ENCODE measurements at regions of chr19 and their contacts with region 1.

Region 1: DNA sequence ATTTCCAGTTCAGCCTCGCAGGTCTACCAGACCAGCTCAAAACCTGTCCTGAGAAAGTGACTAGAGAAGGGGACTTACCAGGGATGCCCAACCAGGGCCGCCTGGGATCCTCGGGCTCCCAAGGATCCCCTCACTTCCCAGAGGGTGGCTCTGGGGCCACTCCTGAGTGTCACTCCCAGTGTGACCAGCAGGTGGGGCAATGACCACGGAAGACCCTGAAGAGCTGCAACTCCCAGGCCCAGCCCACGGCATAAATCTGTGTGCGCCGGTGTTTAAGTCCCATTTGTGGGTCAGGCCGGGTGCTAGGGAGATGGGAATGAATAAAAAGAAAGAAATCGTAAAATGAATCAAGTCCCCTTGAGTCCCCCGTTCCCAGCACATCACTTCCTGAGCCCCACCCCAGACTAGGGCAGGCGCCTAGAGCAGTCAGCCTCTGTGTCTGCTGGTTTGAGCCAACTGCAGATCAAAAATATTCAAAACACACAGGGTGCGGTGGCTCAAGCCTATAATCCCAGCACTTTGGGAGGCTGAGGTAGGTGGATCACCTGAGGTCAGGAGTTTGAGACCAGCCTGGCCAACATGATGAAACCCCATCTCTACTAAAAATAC is 10.7 kb downstream of the PTGIR start:
- DNase-seq: peak; percentile 66 to 88 (median 83)
- ATAC-seq: peak; percentile 71
- H3K4me3 ChIP-seq: peak overlapping the region in 1 of 2 experiments; percentile 20
- H3K4me3 Mint-ChIP-seq: no peak overlapping the region
- H3K27ac ChIP-seq: no peak overlapping the region
- H3K27ac Mint-ChIP-seq: peak overlapping the region; percentile 70
- H3K4me1 ChIP-seq: peaks cover 76% of the 10 kb centered on the region
- H3K4me1 Mint-ChIP-seq: peaks cover 64% of the 10 kb centered on the region
- H3K27me3 ChIP-seq: no peaks in the 10 kb centered on the region
- H3K27me3 Mint-ChIP-seq: no peaks in the 10 kb centered on the region
- CTCF ChIP-seq: peak; percentile 91

Region 2: DNA sequence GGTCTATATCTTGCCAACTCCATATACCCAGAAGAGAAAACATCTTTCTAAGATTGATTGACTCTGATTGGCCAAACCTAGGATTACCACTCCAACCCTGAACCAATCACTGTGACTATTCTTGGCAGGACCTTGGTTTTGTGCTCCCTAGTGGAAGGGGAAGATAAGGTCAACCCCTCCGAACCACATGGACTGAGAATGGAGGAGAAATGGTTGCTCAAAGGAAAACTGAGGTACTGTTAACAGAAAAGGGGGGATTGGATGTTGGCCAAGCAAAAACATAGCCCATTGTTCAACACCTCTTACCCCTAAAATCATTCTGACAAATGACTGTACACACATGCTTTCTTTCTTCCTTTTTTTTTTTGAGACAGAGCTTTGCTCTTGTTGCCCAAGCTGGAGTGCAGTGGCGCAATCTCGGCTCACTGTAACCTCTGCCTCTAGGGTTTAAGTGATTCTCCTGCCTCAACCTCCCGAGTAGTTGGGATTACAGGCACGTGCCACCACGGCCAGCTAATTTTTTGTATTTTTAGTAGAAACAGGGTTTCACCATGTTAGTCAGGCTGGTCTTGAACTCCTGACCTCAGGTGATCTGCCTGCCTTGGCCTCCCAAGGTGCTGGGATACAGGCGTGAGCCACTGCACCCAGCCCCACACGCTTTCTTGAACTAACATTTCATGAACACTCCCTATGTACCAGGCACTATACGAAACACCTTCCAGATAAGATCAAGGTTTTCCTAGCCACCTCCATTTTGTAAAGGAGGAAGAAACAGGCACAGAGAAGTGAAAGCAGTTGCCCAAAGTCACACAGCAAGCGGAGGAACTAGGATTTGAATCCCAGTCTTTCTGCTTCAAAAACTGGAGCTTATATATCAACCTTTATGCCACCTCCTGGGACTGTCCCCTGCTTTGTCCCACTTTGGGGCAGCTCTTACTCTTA is 874.4 kb before region 1 on chr19:
- CTCF ChIA-PET with region 1: no interaction called
- POLR2A ChIA-PET with region 1: no interaction called
- intact Hi-C with region 1: no loop called
- DNase-seq: no peak
- ATAC-seq: no peak
- H3K4me3 ChIP-seq: no peak overlapping the region
- H3K4me3 Mint-ChIP-seq: no peak overlapping the region
- H3K27ac ChIP-seq: no peak overlapping the region
- H3K27ac Mint-ChIP-seq: no peak overlapping the region
- H3K4me1 ChIP-seq: no peaks in the 10 kb centered on the region
- H3K4me1 Mint-ChIP-seq: no peaks in the 10 kb centered on the region
- H3K27me3 ChIP-seq: no peaks in the 10 kb centered on the region
- H3K27me3 Mint-ChIP-seq: peaks cover 6% of the 10 kb centered on the region
- CTCF ChIP-seq: no peak

Region 3: GRCh38 chr19:46579361-46579879 is 34.8 kb before region 1 on chr19:
- CTCF ChIA-PET with region 1: no interaction called
- POLR2A ChIA-PET with region 1: no interaction called
- intact Hi-C with region 1: loop called in 1 of 2 experiments (anchors 1 kb)
- DNase-seq: peak in 6 of 9 experiments; percentile 14 to 58 (median 36)
- ATAC-seq: peak; percentile 66
- H3K4me3 ChIP-seq: no peak overlapping the region
- H3K4me3 Mint-ChIP-seq: no peak overlapping the region
- H3K27ac ChIP-seq: no peak overlapping the region
- H3K27ac Mint-ChIP-seq: no peak overlapping the region
- H3K4me1 ChIP-seq: peaks cover 4% of the 10 kb centered on the region
- H3K4me1 Mint-ChIP-seq: peaks cover 21% of the 10 kb centered on the region
- H3K27me3 ChIP-seq: no peaks in the 10 kb centered on the region
- H3K27me3 Mint-ChIP-seq: peaks cover 3% of the 10 kb centered on the region
- CTCF ChIP-seq: peak; percentile 41

Region 4: DNA sequence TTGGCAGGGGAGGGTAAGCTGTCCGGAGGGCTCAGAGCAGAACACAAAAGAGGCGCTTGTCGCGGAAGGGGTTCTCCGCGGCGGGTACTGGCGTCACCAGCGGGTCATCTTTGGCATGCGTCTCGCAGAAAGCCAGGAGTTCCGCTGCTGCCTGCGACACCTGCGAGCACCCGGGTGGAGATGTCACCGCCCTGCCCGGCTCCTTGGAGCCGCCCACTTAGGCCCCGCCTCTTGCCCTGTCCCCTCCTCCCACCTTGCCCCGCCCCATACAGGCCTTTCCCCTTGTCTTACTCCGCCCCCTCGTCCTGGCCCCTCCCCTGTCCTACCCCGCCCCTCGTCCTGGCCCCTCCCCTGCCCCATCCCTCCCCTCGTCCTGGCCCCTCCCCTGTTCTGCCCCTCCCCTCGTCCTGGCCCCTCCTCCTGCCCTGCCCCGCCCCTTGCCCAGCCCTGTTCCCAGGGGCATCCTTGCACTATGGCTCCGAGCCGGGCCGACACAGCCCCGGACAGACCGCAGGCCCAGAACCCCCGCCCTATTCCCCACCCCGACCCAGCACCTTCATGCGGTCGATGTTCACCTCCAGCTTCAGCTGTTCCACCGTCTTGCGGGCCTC is 19.9 kb after region 1 on chr19:
- CTCF ChIA-PET with region 1: interaction called, 17 read pairs
- POLR2A ChIA-PET with region 1: interaction called, 10 read pairs
- intact Hi-C with region 1: loop called (anchors 1 kb)
- DNase-seq: peak; percentile 86 to 96 (median 92)
- ATAC-seq: peak; percentile 83
- H3K4me3 ChIP-seq: peak overlapping the region; percentile 40 to 59
- H3K4me3 Mint-ChIP-seq: peak overlapping the region; percentile 80
- H3K27ac ChIP-seq: peak overlapping the region; percentile 35 to 48
- H3K27ac Mint-ChIP-seq: peak overlapping the region; percentile 90
- H3K4me1 ChIP-seq: peaks cover 36% of the 10 kb centered on the region
- H3K4me1 Mint-ChIP-seq: peaks cover 24% of the 10 kb centered on the region
- H3K27me3 ChIP-seq: peaks cover 0 to 24% of the 10 kb centered on the region in 2 experiments
- H3K27me3 Mint-ChIP-seq: no peaks in the 10 kb centered on the region
- CTCF ChIP-seq: no peak

Region 5: GRCh38 chr19:46728693-46729676 is 114.8 kb after region 1 on chr19:
- CTCF ChIA-PET with region 1: interaction called, 11 read pairs
- POLR2A ChIA-PET with region 1: no interaction called
- intact Hi-C with region 1: loop called in 1 of 2 experiments (anchors 1 kb)
- DNase-seq: peak; percentile 64 to 93 (median 84)
- ATAC-seq: peak; percentile 90
- H3K4me3 ChIP-seq: no peak overlapping the region
- H3K4me3 Mint-ChIP-seq: no peak overlapping the region
- H3K27ac ChIP-seq: no peak overlapping the region
- H3K27ac Mint-ChIP-seq: peak overlapping the region; percentile 32
- H3K4me1 ChIP-seq: peaks cover 13% of the 10 kb centered on the region
- H3K4me1 Mint-ChIP-seq: peaks cover 10% of the 10 kb centered on the region
- H3K27me3 ChIP-seq: no peaks in the 10 kb centered on the region
- H3K27me3 Mint-ChIP-seq: no peaks in the 10 kb centered on the region
- CTCF ChIP-seq: peak; percentile 90